ENCODE measurements at regions of chr4 and their contacts with region 1.

Region 1: GRCh38 chr4:54228056-54228527 is 1.0 kb upstream of the PDGFRA start:
- DNase-seq: peak; percentile 59 to 73 (median 70)
- H3K4me3 ChIP-seq: peak overlapping the region in 1 of 4 donors; percentile 41
- H3K27ac ChIP-seq: peak overlapping the region in 2 of 5 donors; percentile 55 to 77
- H3K4me1 ChIP-seq: peaks cover 17 to 35% of the 10 kb centered on the region in 2 donors
- H3K27me3 ChIP-seq: peaks cover 67% of the 10 kb centered on the region
- CTCF ChIP-seq: peak; percentile 56 to 78 (median 66)
- POLR2A ChIP-seq: no peak

Region 2: GRCh38 chr4:52376132-52376704 is 1851.9 kb before region 1 on chr4:
- intact Hi-C with region 1: loop called in 1 of 2 experiments (anchors 10 kb)
- DNase-seq: peak in 5 of 7 donors; percentile 23 to 57 (median 49)
- H3K4me3 ChIP-seq: no peak overlapping the region
- H3K27ac ChIP-seq: no peak overlapping the region
- H3K4me1 ChIP-seq: no peaks in the 10 kb centered on the region
- H3K27me3 ChIP-seq: no peaks in the 10 kb centered on the region
- CTCF ChIP-seq: peak; percentile 59 to 82 (median 71)
- POLR2A ChIP-seq: no peak

Region 3: DNA sequence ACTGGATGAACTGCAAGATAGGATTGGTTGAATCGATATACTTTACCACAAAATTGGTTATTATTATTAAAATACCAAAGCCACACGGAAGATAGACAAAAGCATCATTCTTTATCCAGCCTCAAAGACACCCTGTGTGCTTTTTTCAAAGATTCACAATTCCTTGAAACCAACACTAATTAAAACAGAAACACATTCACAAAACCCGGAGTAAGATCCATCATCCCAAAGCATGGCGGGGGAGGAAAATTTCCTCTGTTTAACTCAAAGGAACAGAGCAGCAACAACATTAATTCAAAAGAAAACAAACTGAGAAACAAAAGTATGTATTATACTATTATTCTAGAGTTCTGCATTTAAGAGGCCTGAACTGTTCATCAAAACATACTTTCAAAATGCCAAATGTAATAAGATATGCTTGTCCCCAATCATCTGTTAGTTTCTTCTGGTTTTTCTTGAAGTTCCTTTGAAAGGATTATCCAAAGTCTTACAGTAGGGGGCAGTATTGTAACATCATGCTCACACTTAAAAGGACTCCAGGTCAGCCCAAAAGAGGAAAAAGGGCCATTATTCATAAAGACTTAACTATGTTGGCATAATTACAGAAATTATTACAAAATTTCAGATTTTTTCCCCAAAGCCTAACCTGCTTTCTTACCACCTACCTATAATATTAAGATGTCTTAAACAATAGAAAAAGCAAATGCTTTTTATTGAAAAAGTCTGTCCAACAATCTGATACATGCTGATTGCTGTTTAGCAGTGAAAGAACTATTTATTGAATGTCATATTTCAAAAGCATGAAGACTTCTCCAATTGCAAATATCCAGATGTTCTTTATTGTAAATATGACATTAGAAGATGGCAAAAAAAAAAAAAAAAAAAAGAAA is 1031.0 kb before region 1 on chr4:
- intact Hi-C with region 1: loop called (anchors 10 kb)
- DNase-seq: no peak
- H3K4me3 ChIP-seq: no peak overlapping the region
- H3K27ac ChIP-seq: no peak overlapping the region
- H3K4me1 ChIP-seq: peaks cover 5 to 8% of the 10 kb centered on the region in 2 donors
- H3K27me3 ChIP-seq: no peaks in the 10 kb centered on the region
- CTCF ChIP-seq: peak; percentile 70 to 87 (median 80)
- POLR2A ChIP-seq: no peak

Region 4: DNA sequence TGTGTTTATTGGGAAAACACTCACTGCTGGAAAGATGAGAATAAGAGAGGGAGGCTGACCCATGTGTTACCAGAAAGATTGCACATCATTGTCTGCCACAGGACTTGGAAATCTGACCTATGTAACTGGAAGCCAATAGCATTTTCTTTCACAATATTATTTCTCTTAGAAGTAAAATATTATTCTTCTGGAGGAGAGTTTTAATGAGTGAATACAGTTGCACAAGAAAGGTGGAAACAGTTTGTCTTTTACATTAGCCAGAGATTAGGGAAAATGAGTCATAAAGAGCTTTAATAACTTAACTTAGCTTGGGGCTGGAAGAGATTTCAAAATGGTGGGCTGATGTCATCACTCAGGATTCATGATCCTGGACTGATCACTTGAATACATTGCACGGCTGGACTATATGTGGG is 605.3 kb before region 1 on chr4:
- intact Hi-C with region 1: no loop called
- DNase-seq: peak in 1 of 7 donors; percentile 9
- H3K4me3 ChIP-seq: no peak overlapping the region
- H3K27ac ChIP-seq: no peak overlapping the region
- H3K4me1 ChIP-seq: peaks cover 5 to 6% of the 10 kb centered on the region in 2 donors
- H3K27me3 ChIP-seq: no peaks in the 10 kb centered on the region
- CTCF ChIP-seq: no peak
- POLR2A ChIP-seq: no peak

Region 5: DNA sequence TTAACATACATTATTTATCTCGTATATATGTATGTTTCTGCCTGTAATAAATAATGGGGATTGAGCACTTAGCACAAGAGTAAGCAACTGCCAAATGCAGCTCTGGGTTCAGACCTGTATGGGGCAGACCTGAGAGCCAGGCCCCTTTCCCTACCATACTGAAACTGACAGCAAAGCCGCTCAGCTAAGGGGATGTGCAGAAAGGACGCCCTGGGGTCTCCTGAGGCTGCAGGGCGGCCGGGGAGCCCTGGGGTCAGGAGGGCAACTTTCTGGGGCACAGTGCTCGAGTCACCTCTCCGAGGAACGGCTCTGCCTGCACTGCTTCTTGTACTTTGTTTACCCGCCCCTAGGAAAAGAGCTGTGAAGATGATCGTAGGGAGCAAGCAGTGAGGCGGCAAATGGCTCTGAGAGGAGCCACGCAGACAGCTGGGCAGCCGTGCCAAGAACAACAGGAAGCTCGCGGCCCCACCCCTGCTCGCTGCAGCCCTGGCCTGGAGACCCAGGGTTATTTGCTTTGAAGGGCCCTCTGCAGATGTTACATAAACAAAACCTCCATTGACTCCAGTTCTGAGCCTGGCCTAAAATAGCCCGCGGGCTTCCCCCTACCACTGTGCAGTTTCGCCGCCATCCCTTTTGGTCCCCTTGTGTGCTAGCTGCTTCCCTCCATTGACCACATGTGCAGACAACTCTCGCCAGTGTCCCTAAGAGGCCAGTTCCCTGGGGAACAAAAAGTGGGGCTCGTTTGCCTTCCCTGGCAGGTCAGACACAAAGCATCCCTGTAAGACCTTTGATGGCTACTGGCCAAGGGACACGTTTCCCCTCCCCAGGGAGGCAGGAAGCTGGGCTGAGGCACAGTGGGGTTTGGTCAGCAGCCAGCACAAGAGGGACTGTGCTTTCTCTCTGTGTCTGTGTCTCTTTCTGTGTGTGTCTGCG is 525.5 kb before region 1 on chr4:
- intact Hi-C with region 1: loop called (anchors 5 to 10 kb)
- DNase-seq: peak; percentile 68 to 91 (median 78)
- H3K4me3 ChIP-seq: peak overlapping the region in 1 of 4 donors; percentile 41
- H3K27ac ChIP-seq: peak overlapping the region in 2 of 5 donors; percentile 58 to 84
- H3K4me1 ChIP-seq: peaks cover 11 to 22% of the 10 kb centered on the region in 2 donors
- H3K27me3 ChIP-seq: no peaks in the 10 kb centered on the region
- CTCF ChIP-seq: peak in 1 of 6 experiments; percentile 12
- POLR2A ChIP-seq: no peak

Region 6: DNA sequence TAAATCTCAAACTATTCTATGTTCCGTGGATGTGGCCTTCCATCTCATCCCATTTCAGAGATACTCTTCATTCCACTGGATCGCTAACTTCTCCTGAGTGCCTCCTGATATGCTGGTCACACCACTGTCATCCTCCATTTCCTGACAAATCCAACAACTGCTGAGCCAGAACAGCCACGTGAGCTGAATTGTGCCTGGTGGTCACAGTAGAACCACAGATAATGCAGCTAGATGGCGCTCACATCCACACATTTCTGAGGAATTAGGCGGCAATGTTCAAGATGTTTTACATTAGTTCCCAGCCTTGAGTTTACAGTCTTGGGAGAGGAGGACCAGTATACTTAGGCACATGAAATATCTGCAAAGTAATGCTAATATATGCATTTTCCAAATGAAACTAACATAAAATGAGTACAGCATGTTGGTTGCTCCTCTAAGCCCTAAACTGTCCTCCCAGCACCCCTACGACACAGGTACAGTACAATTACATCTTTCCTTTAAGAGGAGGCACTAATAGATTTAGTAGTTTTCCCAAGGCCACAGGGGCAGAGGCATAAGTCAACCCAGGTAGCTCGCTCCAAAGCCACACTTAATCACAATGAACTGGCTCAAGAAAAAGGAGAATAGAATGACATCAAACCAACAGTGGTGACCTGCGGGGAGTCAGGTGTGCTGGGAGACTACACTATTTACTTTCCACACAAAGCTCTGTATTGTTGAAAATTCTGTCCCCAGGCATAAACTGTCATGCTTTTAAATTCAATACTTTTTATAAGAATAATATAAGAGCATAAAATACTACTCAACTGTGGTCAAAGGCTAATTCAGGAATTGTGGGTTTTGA is 297.9 kb before region 1 on chr4:
- intact Hi-C with region 1: loop called in 1 of 2 experiments (anchors 5 kb)
- DNase-seq: peak; percentile 75 to 95 (median 86)
- H3K4me3 ChIP-seq: no peak overlapping the region
- H3K27ac ChIP-seq: no peak overlapping the region
- H3K4me1 ChIP-seq: no peaks in the 10 kb centered on the region
- H3K27me3 ChIP-seq: no peaks in the 10 kb centered on the region
- CTCF ChIP-seq: peak; percentile 62 to 95 (median 91)
- POLR2A ChIP-seq: no peak

Region 7: DNA sequence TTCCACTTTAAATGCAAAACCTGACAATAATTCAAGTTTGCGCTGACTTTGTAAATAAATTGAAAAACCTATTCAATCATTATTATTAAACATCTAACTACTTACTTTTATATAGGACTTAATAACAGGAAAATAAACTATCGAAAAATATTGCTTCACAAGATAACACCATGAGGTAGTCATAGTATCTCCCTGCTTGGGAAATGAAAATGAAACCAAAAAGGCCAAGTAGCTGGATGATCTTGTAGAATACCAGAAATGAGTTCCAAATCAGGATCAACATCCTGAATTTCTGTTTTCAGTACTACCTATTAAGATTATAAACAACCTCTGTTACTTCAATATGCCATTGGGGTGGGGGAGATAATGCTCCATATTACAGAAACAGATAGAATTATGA is 222.6 kb before region 1 on chr4:
- intact Hi-C with region 1: no loop called
- DNase-seq: no peak
- H3K4me3 ChIP-seq: peak overlapping the region in 1 of 4 donors; percentile 20
- H3K27ac ChIP-seq: peak overlapping the region in 2 of 5 donors; percentile 13 to 33
- H3K4me1 ChIP-seq: peaks cover 0 to 26% of the 10 kb centered on the region in 2 donors
- H3K27me3 ChIP-seq: no peaks in the 10 kb centered on the region
- CTCF ChIP-seq: no peak
- POLR2A ChIP-seq: no peak

Region 8: GRCh38 chr4:54392479-54392878 is 164.4 kb after region 1 on chr4:
- intact Hi-C with region 1: no loop called
- DNase-seq: no peak
- H3K4me3 ChIP-seq: no peak overlapping the region
- H3K27ac ChIP-seq: no peak overlapping the region
- H3K4me1 ChIP-seq: no peaks in the 10 kb centered on the region
- H3K27me3 ChIP-seq: no peaks in the 10 kb centered on the region
- CTCF ChIP-seq: no peak
- POLR2A ChIP-seq: no peak